Caco-2 (cell line): ENCODE measurements at regions of chr15 and their contacts with region 1.

Region 1: GRCh38 chr15:94119923-94120775 is 111.2 kb upstream of the MCTP2 start:
- DNase-seq: peak; percentile 66 to 75
- H3K4me3 ChIP-seq: no peak overlapping the region
- H3K4me3 Mint-ChIP-seq: no peak overlapping the region
- H3K27ac Mint-ChIP-seq: no peak overlapping the region
- H3K4me1 ChIP-seq: peaks cover 8% of the 10 kb centered on the region
- H3K4me1 Mint-ChIP-seq: peaks cover 5% of the 10 kb centered on the region
- H3K27me3 ChIP-seq: no peaks in the 10 kb centered on the region
- H3K27me3 Mint-ChIP-seq: peaks cover 2% of the 10 kb centered on the region
- CTCF ChIP-seq: peak; percentile 93 to 95

Region 2: GRCh38 chr15:93030430-93031105 is 1089.6 kb before region 1 on chr15:
- CTCF ChIA-PET with region 1: interaction called, 23 read pairs
- POLR2A ChIA-PET with region 1: no interaction called
- intact Hi-C with region 1: loop called (anchors 1 kb)
- DNase-seq: peak; percentile 60 to 74
- H3K4me3 ChIP-seq: no peak overlapping the region
- H3K4me3 Mint-ChIP-seq: no peak overlapping the region
- H3K27ac Mint-ChIP-seq: peak overlapping the region; percentile 87
- H3K4me1 ChIP-seq: no peaks in the 10 kb centered on the region
- H3K4me1 Mint-ChIP-seq: peaks cover 18% of the 10 kb centered on the region
- H3K27me3 ChIP-seq: no peaks in the 10 kb centered on the region
- H3K27me3 Mint-ChIP-seq: no peaks in the 10 kb centered on the region
- CTCF ChIP-seq: peak; percentile 76 to 84

Region 3: GRCh38 chr15:93087825-93088199 is 1032.3 kb before region 1 on chr15:
- CTCF ChIA-PET with region 1: interaction called, 31 read pairs
- POLR2A ChIA-PET with region 1: no interaction called
- intact Hi-C with region 1: loop called (anchors 1 kb)
- DNase-seq: peak; percentile 57 to 73
- H3K4me3 ChIP-seq: peak overlapping the region; percentile 57
- H3K4me3 Mint-ChIP-seq: peak overlapping the region; percentile 74
- H3K27ac Mint-ChIP-seq: no peak overlapping the region
- H3K4me1 ChIP-seq: no peaks in the 10 kb centered on the region
- H3K4me1 Mint-ChIP-seq: no peaks in the 10 kb centered on the region
- H3K27me3 ChIP-seq: no peaks in the 10 kb centered on the region
- H3K27me3 Mint-ChIP-seq: peaks cover 13% of the 10 kb centered on the region
- CTCF ChIP-seq: peak; percentile 84 to 91

Region 4: GRCh38 chr15:93826790-93827189 is 293.4 kb before region 1 on chr15:
- CTCF ChIA-PET with region 1: interaction called, 9 read pairs
- POLR2A ChIA-PET with region 1: no interaction called
- intact Hi-C with region 1: loop called (anchors 10 kb)
- DNase-seq: no peak
- H3K4me3 ChIP-seq: no peak overlapping the region
- H3K4me3 Mint-ChIP-seq: no peak overlapping the region
- H3K27ac Mint-ChIP-seq: no peak overlapping the region
- H3K4me1 ChIP-seq: peaks cover 26% of the 10 kb centered on the region
- H3K4me1 Mint-ChIP-seq: peaks cover 10% of the 10 kb centered on the region
- H3K27me3 ChIP-seq: no peaks in the 10 kb centered on the region
- H3K27me3 Mint-ChIP-seq: no peaks in the 10 kb centered on the region
- CTCF ChIP-seq: no peak

Region 5: DNA sequence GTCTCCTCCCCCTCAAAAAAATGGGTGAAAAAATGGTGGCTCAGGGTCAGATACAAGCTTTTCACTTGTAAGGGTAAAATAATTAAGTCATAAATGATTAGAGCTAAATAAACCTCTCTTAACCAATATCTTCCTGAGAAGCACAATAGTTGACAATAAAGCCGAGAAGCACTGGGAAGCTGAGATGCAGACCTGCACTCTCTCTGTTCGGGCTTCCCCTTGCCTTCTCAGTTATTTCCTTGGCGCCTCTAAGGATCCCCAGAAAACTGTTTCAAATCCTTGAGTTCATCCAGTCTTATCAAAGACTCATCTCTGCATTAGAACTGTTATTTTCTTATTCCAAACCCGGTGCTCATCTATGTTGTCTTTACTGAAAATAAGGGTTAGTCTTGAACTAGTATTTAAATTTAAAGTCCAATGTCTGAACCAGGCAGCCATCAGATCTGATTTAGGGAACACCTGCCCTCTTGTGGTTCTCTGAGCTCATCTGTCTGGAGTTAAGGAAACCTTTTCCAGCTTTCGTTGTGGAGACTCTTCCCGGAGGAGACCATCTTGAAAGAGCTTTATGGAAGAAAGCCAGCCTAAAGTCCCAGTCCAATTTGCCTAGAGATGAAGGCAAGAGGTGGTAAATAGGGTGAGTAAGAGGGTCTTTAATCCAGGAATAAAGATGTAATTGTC is 145.2 kb before region 1 on chr15:
- CTCF ChIA-PET with region 1: interaction called, 51 read pairs
- POLR2A ChIA-PET with region 1: no interaction called
- intact Hi-C with region 1: loop called (anchors 1 kb)
- DNase-seq: peak; percentile 50 to 52
- H3K4me3 ChIP-seq: no peak overlapping the region
- H3K4me3 Mint-ChIP-seq: no peak overlapping the region
- H3K27ac Mint-ChIP-seq: no peak overlapping the region
- H3K4me1 ChIP-seq: no peaks in the 10 kb centered on the region
- H3K4me1 Mint-ChIP-seq: no peaks in the 10 kb centered on the region
- H3K27me3 ChIP-seq: no peaks in the 10 kb centered on the region
- H3K27me3 Mint-ChIP-seq: peaks cover 6% of the 10 kb centered on the region
- CTCF ChIP-seq: peak; percentile 52 to 67

Region 6: GRCh38 chr15:93997084-93997918 is 122.8 kb before region 1 on chr15:
- CTCF ChIA-PET with region 1: interaction called, 52 read pairs
- POLR2A ChIA-PET with region 1: interaction called, 6 read pairs
- intact Hi-C with region 1: loop called (anchors 1 kb)
- DNase-seq: peak; percentile 41 to 65
- H3K4me3 ChIP-seq: no peak overlapping the region
- H3K4me3 Mint-ChIP-seq: no peak overlapping the region
- H3K27ac Mint-ChIP-seq: no peak overlapping the region
- H3K4me1 ChIP-seq: peaks cover 19% of the 10 kb centered on the region
- H3K4me1 Mint-ChIP-seq: peaks cover 15% of the 10 kb centered on the region
- H3K27me3 ChIP-seq: no peaks in the 10 kb centered on the region
- H3K27me3 Mint-ChIP-seq: no peaks in the 10 kb centered on the region
- CTCF ChIP-seq: peak; percentile 73 to 85

Region 7: DNA sequence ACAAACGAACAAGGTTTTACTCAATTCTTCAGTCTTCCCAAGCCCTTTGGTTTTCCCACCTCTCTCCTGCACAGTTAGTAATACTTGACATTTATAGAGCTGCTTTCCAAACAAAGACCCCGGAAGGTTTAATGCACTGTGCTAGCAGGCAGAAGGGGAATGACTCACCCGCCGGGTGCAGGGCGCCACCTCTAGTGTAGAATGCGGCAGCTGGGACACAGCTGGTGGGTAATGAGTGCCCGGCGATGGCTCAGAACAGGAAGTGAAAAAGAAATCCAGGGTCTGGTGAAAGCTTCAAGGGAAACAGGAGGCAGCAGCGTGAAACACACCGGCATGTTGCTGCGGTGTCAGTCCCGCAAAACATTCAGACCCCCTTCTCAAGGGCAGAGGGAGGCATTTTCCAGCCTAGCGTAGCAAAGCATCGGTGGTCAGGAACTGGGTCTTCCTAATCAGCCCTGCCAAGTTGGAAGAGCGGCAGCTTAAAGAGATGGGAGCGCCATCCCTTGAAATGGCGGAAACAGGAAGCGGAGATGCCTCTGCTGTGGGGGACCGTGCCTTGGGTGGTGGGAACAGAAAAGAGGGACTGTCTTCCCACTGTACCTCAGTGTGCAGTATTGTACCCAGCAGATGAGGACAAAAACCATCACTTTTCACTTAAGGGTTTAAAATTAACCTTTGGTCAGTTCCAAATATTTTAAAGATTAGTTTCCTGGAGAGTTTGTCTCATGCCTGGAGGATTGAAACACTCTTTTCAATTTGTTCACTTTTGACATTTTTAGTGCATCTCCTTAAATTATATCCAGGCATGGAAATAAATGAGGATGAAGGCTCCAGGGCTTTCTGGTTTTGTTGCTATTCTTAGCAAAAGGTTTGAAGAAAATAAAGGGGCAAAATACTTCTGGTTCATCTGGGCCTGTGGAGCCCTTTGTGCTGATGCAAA is 49.5 kb before region 1 on chr15:
- CTCF ChIA-PET with region 1: no interaction called
- POLR2A ChIA-PET with region 1: no interaction called
- intact Hi-C with region 1: no loop called
- DNase-seq: no peak
- H3K4me3 ChIP-seq: no peak overlapping the region
- H3K4me3 Mint-ChIP-seq: no peak overlapping the region
- H3K27ac Mint-ChIP-seq: no peak overlapping the region
- H3K4me1 ChIP-seq: no peaks in the 10 kb centered on the region
- H3K4me1 Mint-ChIP-seq: peaks cover 6% of the 10 kb centered on the region
- H3K27me3 ChIP-seq: no peaks in the 10 kb centered on the region
- H3K27me3 Mint-ChIP-seq: no peaks in the 10 kb centered on the region
- CTCF ChIP-seq: no peak